ENCODE measurements at regions of chrX and their contacts with region 1.

Region 1: GRCh38 chrX:115330498-115331168 is 41.1 kb downstream of the LUZP4 start:
- DNase-seq: peak in 7 of 10 donors; percentile 19 to 86 (median 35)

Region 2: DNA sequence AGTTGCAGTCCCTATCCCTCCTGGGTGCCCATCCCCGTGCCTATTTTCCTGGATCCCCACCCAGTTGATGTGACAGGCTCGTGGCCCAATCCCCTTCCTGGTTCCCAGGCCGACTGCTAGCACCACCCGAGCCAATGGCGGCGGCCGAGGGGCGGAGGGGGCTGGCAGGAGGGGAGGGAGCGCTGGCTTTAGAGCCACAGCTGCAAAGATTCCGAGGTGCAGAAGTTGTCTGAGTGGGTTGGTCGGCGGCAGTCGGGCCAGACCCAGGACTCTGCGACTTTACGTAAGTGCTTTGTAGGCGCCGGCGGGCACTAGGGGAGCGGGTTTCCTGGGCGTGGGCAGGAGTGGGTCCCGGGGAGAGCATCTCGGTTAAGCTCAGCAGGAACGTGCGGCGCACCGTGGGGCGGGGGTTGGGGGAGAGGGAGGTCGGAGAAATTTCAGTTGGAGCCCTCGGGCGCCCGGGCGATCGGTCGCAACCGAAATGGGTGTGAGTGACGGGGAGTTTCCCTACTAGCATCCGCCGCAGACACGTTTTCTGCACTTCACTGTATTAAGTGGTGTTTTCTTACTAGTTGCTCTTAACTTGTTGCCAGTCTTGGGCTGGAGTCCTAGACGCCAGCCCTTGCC is 230.5 kb after region 1 on chrX and contains the start of gene PLS3:
- intact Hi-C with region 1: loop called (anchors 10 kb)
- DNase-seq: peak; percentile 71 to 97 (median 79)

Region 3: DNA sequence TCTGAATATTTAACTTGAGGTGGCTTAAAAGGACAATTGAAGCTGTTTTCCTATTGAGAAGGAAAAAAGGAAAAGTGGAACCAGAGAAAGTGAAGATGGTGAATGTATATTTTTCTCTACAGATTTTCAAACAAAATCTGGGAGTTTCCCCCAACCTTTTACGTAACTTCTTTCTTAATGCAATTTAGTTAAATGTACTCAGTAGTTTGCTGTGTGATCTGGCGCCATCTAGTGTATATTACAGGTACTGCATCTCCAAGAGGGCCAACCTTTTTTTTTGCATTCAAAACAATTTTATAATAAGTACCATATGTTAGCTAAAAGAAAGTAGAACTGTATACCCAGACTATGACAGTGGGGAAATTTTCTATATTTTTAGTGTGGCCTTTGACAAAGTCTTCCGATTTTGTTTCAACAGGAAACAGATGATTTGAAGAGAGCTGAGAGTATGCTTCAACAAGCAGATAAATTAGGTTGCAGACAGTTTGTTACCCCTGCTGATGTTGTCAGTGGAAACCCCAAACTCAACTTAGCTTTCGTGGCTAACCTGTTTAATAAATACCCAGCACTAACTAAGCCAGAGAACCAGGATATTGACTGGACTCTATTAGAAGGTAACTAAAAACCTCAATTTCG is 312.4 kb after region 1 on chrX:
- intact Hi-C with region 1: loop called (anchors 1 kb)
- DNase-seq: peak in 3 of 10 donors; percentile 16 to 25 (median 18)

Region 4: DNA sequence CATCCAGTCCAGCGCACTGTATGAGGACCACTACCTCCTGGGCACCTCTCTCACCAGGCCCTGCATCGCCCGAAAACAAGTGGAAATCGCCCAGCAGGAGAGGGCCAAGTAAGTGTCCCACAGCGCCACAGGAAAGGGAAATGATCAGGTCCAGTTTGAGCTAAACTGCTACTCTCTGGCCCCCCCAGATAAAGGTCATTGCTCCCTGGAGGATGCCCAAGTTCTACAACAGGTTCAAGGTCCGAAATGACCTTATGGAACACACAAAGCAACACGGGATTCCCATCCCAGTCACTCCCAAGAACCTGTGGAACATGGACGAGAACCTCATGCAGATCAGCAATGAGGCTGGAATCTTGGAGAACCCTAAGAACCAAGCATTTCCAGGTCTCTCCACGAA is 334.5 kb after region 1 on chrX:
- intact Hi-C with region 1: no loop called
- DNase-seq: no peak

Region 5: DNA sequence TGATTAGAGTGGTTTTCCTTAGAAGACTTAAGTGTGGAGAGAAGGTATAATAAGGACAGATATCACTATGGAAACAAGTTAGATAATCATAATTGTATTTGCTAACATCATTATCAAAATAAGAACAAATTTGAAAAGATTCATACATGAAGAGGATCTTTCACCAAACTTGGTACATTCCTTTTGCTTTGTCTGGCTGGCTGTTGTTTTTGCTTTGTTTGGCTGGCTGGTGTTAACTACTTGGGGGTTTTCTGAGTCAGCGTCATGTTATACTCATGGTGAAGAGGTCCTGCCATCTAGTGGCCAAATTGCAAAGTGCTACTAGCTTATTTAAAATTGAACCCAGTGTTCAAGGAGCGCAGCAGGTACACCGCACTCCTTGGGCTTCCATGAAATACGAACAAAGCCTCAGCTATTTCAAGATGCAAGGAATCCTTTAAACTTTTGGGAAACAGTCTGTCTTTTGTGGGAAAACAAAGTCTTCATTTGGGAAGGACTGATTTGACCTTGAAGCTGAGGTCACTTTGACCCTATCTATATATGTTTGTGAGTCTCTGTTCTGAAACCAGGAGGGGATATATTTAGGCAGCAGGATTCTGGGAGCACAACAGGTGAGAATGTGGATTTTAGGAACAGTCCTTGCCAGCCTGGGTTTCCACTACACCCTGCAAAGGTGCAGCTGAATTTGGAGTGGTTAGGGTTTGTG is 360.0 kb after region 1 on chrX:
- intact Hi-C with region 1: loop called (anchors 5 kb)
- DNase-seq: peak in 5 of 10 donors; percentile 4 to 41 (median 17)

Measured in posterior cingulate gyrus (tissue), 11 donors.